Natural killer cell (primary cell): ENCODE measurements at regions of chr5 and their contacts with region 1.

Region 1: DNA sequence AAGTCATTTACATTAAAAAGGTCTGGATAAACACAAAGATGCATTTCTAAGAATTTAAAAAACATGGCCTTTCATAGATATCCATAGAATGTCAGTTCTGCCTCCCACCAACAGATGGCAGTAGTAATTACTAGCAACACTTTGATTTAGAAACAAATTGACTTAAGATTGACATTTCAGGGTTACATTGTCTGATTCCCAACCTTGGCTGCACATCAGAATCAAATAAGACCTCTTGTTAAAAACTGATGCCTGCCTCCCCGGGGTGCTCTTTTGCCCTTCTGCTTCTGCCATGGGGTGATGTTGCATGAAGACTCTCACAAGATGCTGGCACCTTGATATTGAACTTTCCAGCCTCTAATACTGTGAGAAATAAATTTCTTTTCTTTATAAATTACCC is 146.2 kb upstream of the GPR151 start:
- DNase-seq: peak in 1 of 2 donors; percentile 70
- ATAC-seq: peak in 2 of 3 donors; percentile 53 to 69
- H3K4me3 ChIP-seq: no peak overlapping the region
- H3K4me3 Mint-ChIP-seq: no peak overlapping the region
- H3K27ac ChIP-seq: no peak overlapping the region
- H3K27ac Mint-ChIP-seq: no peak overlapping the region
- H3K4me1 ChIP-seq: no peaks in the 10 kb centered on the region
- H3K4me1 Mint-ChIP-seq: no peaks in the 10 kb centered on the region
- H3K27me3 ChIP-seq: no peaks in the 10 kb centered on the region
- H3K27me3 Mint-ChIP-seq: no peaks in the 10 kb centered on the region
- CTCF ChIP-seq: peak; percentile 90

Region 2: DNA sequence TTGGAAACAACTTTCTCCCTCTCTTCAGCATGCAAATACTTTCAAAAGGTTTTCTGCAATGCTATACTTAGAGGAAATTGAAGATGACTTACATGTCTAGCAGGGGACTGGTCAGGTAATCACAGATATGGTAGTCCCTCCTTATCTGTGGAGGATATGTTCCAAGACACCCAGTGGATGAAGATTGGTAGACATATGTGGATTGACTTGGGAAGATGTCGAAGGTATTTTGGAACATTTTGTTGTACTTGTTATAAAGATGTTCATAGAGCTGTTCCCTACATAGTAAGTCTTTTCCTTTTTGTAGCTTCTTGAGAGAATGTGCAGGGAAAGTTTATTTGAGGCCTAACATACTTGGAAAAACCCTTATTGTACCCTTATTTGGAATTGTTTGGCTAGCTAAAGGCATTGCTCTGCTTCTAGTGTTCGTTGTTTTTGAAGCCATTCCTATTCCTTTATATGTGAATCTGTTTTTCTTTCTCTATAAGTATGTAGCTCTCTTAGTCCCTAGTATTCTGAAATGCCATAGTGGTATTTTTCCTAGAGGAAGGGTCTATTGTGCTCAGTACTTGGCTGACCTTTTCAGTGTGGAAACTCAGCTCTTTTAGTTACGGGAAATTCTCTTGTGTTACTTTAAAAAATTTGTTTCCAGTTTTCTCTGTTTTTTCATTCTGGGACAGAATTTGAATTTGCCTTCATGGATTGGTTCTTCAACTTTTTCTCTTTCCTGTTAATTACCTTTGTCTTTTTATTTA is 172.0 kb before region 1 on chr5:
- intact Hi-C with region 1: no loop called
- DNase-seq: no peak
- ATAC-seq: no peak
- H3K4me3 ChIP-seq: no peak overlapping the region
- H3K4me3 Mint-ChIP-seq: no peak overlapping the region
- H3K27ac ChIP-seq: no peak overlapping the region
- H3K27ac Mint-ChIP-seq: no peak overlapping the region
- H3K4me1 ChIP-seq: no peaks in the 10 kb centered on the region
- H3K4me1 Mint-ChIP-seq: no peaks in the 10 kb centered on the region
- H3K27me3 ChIP-seq: no peaks in the 10 kb centered on the region
- H3K27me3 Mint-ChIP-seq: no peaks in the 10 kb centered on the region
- CTCF ChIP-seq: no peak

Region 3: GRCh38 chr5:146541958-146542849 is 120.0 kb before region 1 on chr5:
- intact Hi-C with region 1: loop called (anchors 10 kb)
- DNase-seq: peak; percentile 64 to 78
- ATAC-seq: peak; percentile 80 to 99 (median 89)
- H3K4me3 ChIP-seq: no peak overlapping the region
- H3K4me3 Mint-ChIP-seq: no peak overlapping the region
- H3K27ac ChIP-seq: no peak overlapping the region
- H3K27ac Mint-ChIP-seq: no peak overlapping the region
- H3K4me1 ChIP-seq: no peaks in the 10 kb centered on the region
- H3K4me1 Mint-ChIP-seq: no peaks in the 10 kb centered on the region
- H3K27me3 ChIP-seq: peaks cover 4% of the 10 kb centered on the region
- H3K27me3 Mint-ChIP-seq: peaks cover 0 to 7% of the 10 kb centered on the region in 2 donors
- CTCF ChIP-seq: peak; percentile 92

Region 4: GRCh38 chr5:146794326-146795029 is 132.2 kb after region 1 on chr5:
- intact Hi-C with region 1: loop called (anchors 10 kb)
- DNase-seq: peak in 1 of 2 donors; percentile 12
- ATAC-seq: peak; percentile 54 to 66 (median 56)
- H3K4me3 ChIP-seq: no peak overlapping the region
- H3K4me3 Mint-ChIP-seq: peak overlapping the region; percentile 79
- H3K27ac ChIP-seq: peak overlapping the region; percentile 14
- H3K27ac Mint-ChIP-seq: peak overlapping the region; percentile 79 to 84
- H3K4me1 ChIP-seq: peaks cover 12% of the 10 kb centered on the region
- H3K4me1 Mint-ChIP-seq: peaks cover 77 to 93% of the 10 kb centered on the region in 2 donors
- H3K27me3 ChIP-seq: no peaks in the 10 kb centered on the region
- H3K27me3 Mint-ChIP-seq: no peaks in the 10 kb centered on the region
- CTCF ChIP-seq: no peak

Region 5: GRCh38 chr5:146878476-146879172 is 216.4 kb after region 1 on chr5 and contains the start of gene PPP2R2B:
- intact Hi-C with region 1: loop called (anchors 2 kb)
- DNase-seq: peak in 1 of 2 donors; percentile 70
- ATAC-seq: peak; percentile 75 to 80 (median 76)
- H3K4me3 ChIP-seq: peak within 1 kb of the TSS; percentile 62
- H3K4me3 Mint-ChIP-seq: peak within 1 kb of the TSS; percentile 96
- H3K27ac ChIP-seq: peak within 1 kb of the TSS; percentile 52
- H3K27ac Mint-ChIP-seq: peak within 1 kb of the TSS; percentile 27 to 73
- H3K4me1 ChIP-seq: peaks cover 10% of the 10 kb centered on the region
- H3K4me1 Mint-ChIP-seq: peaks cover 37 to 43% of the 10 kb centered on the region in 2 donors
- H3K27me3 ChIP-seq: no peaks in the 10 kb centered on the region
- H3K27me3 Mint-ChIP-seq: peaks cover 0 to 4% of the 10 kb centered on the region in 2 donors
- CTCF ChIP-seq: no peak
- total RNA-seq, gene PPP2R2B: 44.9 to 68.3 (median 63.7) TPM

Region 6: DNA sequence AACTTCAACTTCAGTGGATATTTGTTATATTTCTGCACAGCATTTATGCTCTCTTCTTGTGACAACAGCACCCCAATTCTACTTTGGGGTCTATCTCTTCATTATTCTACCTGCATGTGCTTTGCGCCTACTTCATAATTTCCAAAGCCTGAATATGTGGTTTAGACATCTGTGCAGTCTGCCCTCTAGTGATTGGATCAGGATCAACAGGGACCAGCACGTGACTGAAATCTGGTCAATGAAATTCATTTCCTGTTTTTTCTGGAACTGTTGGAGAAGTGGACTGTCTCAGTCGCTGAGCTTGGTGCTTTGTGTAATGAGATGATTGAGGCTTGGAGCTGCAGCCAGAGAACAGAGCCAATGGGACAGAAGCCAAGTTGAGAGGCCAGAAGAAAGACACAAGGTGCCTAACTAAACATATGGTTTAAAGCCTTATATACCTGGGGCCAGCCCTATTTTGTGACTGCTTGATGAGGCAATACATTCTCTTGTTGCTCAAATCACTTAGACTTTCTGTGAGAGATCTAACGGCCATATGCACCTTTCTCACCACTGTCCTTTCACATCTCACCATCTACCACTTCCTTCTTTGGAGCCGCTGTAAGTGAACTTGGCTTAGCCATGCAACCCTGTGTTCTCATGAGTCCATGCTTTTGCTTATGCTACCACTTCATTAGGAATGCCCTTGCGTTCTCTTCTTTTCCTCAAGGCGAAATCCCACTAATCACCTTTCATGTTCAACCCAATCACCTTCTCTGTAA is 285.1 kb after region 1 on chr5:
- intact Hi-C with region 1: loop called (anchors 5 kb)
- DNase-seq: peak in 1 of 2 donors; percentile 44
- ATAC-seq: peak; percentile 52 to 82 (median 64)
- H3K4me3 ChIP-seq: no peak overlapping the region
- H3K4me3 Mint-ChIP-seq: peak overlapping the region; percentile 4
- H3K27ac ChIP-seq: no peak overlapping the region
- H3K27ac Mint-ChIP-seq: peak overlapping the region in 1 of 2 donors; percentile 29
- H3K4me1 ChIP-seq: peaks cover 6% of the 10 kb centered on the region
- H3K4me1 Mint-ChIP-seq: peaks cover 13% of the 10 kb centered on the region in 2 donors
- H3K27me3 ChIP-seq: no peaks in the 10 kb centered on the region
- H3K27me3 Mint-ChIP-seq: peaks cover 0 to 12% of the 10 kb centered on the region in 2 donors
- CTCF ChIP-seq: peak; percentile 27

Region 7: DNA sequence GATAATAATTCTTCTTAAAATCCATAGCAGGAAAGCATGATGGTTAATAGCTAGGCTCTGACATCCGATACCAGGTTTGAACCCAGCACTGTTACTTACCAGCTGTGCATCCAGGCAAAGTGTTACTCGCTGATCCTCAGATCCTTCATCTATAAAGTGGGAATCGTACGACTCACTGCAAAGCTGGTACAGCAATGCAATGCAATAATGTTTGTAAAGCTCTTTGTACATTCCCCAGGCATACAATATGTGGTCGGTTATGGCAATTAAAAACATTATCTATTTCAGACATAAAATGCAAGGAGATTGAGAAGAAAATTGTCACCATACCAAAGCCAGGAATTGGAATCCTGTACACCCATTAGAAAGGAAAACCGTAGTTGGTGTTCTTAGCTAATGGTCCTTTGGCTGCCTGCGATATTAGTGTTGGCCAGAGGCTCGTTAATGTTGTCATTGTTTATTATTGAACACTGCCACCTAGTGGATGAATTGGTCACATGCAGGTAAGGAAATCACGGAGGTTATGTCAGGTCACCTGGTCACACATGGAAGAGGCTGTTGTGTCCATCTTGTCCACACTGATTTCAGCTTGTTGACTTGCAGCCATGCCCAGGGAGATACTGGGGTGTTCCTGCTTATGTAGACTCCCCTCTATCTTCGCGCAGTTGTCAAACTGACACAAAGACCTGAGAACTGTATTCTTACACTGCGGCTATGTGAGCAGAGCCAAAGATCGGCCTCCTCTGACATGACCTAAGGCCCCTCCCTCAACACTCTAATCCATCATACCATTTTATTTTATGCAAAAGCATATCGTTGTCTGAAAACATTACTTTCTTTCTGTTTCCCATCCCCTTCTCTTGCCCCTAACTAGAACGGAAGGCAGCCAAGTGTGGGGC is 303.8 kb after region 1 on chr5:
- intact Hi-C with region 1: loop called (anchors 1 kb)
- DNase-seq: peak; percentile 38 to 83
- ATAC-seq: peak; percentile 90 to 99 (median 97)
- H3K4me3 ChIP-seq: no peak overlapping the region
- H3K4me3 Mint-ChIP-seq: no peak overlapping the region
- H3K27ac ChIP-seq: no peak overlapping the region
- H3K27ac Mint-ChIP-seq: no peak overlapping the region
- H3K4me1 ChIP-seq: no peaks in the 10 kb centered on the region
- H3K4me1 Mint-ChIP-seq: no peaks in the 10 kb centered on the region
- H3K27me3 ChIP-seq: no peaks in the 10 kb centered on the region
- H3K27me3 Mint-ChIP-seq: peaks cover 6 to 19% of the 10 kb centered on the region in 2 donors
- CTCF ChIP-seq: peak; percentile 83